Activated naive CD4-positive, alpha-beta T cell treated with anti-CD3 and anti-CD28 coated beads for 36 hours (primary cell): ENCODE measurements at regions of chr1 and their contacts with region 1.

Region 1: GRCh38 chr1:204494281-204495077 is at the start of gene PIK3C2B:
- DNase-seq: peak; percentile 85
- H3K4me3 Mint-ChIP-seq: peak within 1 kb of the TSS; percentile 90
- H3K27ac Mint-ChIP-seq: peak within 1 kb of the TSS; percentile 94
- H3K4me1 Mint-ChIP-seq: peaks cover 58% of the 10 kb centered on the region
- H3K27me3 Mint-ChIP-seq: no peaks in the 10 kb centered on the region
- total RNA-seq, gene PIK3C2B: 61.0 to 65.4 TPM

Region 2: GRCh38 chr1:204431310-204432165 is 62.9 kb before region 1 on chr1:
- CTCF ChIA-PET with region 1: interaction called, 859 read pairs
- intact Hi-C with region 1: loop called (anchors 2 kb)
- DNase-seq: peak; percentile 89
- H3K4me3 Mint-ChIP-seq: no peak overlapping the region
- H3K27ac Mint-ChIP-seq: no peak overlapping the region
- H3K4me1 Mint-ChIP-seq: peaks cover 8% of the 10 kb centered on the region
- H3K27me3 Mint-ChIP-seq: no peaks in the 10 kb centered on the region

Region 3: DNA sequence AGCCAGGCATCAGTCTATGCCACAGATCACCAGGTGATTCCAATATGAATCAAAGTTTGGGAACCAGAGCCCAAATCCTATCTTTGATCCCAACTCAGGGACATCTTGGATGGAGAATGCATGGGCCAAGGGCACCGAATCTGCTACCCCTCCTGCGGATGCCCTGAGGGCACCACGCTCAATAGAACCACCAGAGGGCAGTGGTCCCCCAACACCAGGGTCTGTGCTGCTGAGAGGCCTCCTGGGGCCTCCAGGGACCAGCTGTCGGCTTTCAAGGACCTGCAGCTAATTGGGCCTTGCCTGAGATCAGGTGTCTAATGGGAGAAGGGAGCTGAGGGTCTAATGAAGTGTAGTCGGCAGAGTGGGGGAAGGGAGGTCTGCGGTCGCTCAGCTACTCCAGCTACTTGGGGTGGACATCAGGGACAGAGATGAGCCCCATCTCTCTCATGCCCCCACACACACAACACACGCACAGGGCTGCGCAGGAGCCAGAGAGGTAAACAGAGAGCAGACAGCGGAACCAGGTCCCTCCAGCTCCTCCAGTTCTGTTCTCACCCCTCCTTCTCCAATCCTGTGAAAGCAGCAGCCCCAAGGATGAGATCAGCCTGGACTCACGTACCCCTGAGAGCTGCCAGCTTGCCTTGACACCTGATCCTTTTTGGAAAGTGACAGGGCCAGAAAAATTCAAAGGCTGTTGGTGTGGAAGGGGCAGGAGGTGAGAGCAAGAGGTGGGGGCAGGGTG is 47.9 kb before region 1 on chr1:
- CTCF ChIA-PET with region 1: interaction called, 859 read pairs
- intact Hi-C with region 1: loop called (anchors 1 kb)
- DNase-seq: peak; percentile 88
- H3K4me3 Mint-ChIP-seq: no peak overlapping the region
- H3K27ac Mint-ChIP-seq: peak overlapping the region; percentile 77
- H3K4me1 Mint-ChIP-seq: peaks cover 54% of the 10 kb centered on the region
- H3K27me3 Mint-ChIP-seq: no peaks in the 10 kb centered on the region

Region 4: GRCh38 chr1:204453141-204453772 is 41.2 kb before region 1 on chr1:
- CTCF ChIA-PET with region 1: interaction called, 859 read pairs
- intact Hi-C with region 1: loop called (anchors 1 kb)
- DNase-seq: peak; percentile 92
- H3K4me3 Mint-ChIP-seq: peak overlapping the region; percentile 60
- H3K27ac Mint-ChIP-seq: peak overlapping the region; percentile 94
- H3K4me1 Mint-ChIP-seq: peaks cover 37% of the 10 kb centered on the region
- H3K27me3 Mint-ChIP-seq: no peaks in the 10 kb centered on the region

Region 5: GRCh38 chr1:204465546-204466415 is 28.7 kb before region 1 on chr1:
- CTCF ChIA-PET with region 1: interaction called, 6 read pairs
- intact Hi-C with region 1: loop called (anchors 1 kb)
- DNase-seq: no peak
- H3K4me3 Mint-ChIP-seq: no peak overlapping the region
- H3K27ac Mint-ChIP-seq: peak overlapping the region; percentile 76
- H3K4me1 Mint-ChIP-seq: peaks cover 58% of the 10 kb centered on the region
- H3K27me3 Mint-ChIP-seq: no peaks in the 10 kb centered on the region

Region 6: DNA sequence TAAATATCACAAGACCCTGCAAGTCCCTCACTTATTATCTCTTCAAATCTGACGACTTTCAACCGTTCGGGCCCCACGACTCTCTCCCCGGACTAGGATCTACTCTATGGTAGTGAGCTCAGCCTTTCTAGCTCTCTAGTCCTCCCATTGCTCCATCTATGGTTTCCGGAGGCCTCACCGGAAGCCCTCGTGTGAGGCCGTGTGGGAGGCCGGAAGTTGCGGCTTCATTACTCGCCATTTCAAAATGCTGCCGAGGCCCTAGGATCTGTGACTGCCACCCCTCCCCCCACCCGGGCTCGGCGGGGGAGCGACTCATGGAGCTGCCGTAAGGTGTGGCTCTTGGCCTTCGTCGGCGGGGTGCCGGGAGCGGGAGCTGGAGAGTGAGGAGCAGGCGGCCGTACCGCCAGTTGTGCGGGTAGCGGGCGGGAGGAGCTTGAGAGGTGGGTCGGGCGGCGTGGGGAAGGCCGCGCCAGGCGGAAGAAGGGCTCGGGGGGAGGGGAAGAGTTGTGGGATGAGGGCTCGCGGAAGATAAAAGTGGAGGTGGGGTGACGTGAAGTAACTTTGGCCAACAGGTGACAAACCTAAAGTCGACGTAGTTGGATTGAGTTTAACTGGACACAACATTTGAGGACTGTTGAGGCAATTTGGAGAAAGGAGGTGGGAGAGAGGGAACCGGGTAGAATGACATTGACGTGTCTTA is 21.9 kb after region 1 on chr1 and contains the start of gene MDM4:
- CTCF ChIA-PET with region 1: no interaction called
- intact Hi-C with region 1: loop called (anchors 2 kb)
- DNase-seq: peak; percentile 97
- H3K4me3 Mint-ChIP-seq: no peak within 1 kb of the TSS
- H3K27ac Mint-ChIP-seq: peak within 1 kb of the TSS; percentile 72
- H3K4me1 Mint-ChIP-seq: peaks cover 59% of the 10 kb centered on the region
- H3K27me3 Mint-ChIP-seq: no peaks in the 10 kb centered on the region
- total RNA-seq, gene MDM4: 109 TPM